Heart right ventricle (tissue), 16 donors: ENCODE measurements at regions of chr2 and their contacts with region 1.

Region 1: DNA sequence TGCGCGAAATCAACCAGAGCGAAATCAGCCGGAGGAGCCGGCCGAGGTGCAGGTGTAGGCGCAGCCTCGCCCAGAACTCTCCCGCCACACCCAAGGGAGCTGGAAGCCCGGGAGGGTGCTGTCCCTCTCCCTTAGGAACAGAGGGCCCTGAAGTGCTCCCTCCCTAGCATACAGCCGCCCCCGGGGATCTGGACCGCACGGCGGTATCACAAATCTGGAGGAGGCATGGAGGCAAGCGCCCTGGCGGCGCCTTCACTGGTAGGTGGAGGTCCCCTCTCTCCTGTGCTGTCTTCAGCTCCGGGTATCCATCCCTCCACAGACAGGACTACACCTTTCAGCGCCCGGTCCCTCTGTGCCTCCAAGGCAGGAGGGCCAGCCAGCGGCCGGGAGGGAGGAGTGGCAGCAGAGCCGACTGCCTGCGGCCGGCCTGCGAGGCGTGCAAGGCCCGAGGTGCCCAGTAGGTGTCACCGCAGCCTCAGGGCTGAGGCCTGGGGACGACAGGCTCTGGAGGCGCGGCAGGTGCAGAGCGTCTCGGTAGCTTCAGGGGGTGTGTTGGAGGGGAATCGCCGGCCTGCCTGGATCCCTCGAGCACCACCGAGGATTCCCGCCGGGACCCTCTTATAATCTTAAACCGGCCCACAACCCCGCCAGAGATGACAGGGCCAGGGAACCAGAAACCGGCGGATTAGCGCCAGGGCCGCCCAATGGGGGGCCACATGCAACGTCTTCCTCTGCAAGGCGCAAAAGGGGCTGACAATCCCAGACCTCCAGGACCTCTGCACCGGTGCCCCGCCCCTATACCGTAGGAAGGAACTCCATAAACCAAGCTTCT is 2.8 kb downstream of the IHH start:
- DNase-seq: peak; percentile 63 to 80
- ATAC-seq: peak; percentile 91 to 97 (median 94)
- H3K4me3 ChIP-seq: peak overlapping the region in 4 of 10 donors; percentile 4 to 21 (median 18)
- H3K27ac ChIP-seq: no peak overlapping the region
- H3K4me1 ChIP-seq: peaks cover 27 to 40% (median 37%) of the 10 kb centered on the region in 9 donors
- H3K27me3 ChIP-seq: peaks cover 39 to 99% (median 88%) of the 10 kb centered on the region in 7 donors
- CTCF ChIP-seq: peak; percentile 88 to 97 (median 96)

Region 2: GRCh38 chr2:219104107-219105035 is 46.4 kb after region 1 on chr2:
- intact Hi-C with region 1: loop called in 1 of 10 experiments (anchors 2 kb)
- DNase-seq: no peak
- ATAC-seq: no peak
- H3K4me3 ChIP-seq: no peak overlapping the region
- H3K27ac ChIP-seq: no peak overlapping the region
- H3K4me1 ChIP-seq: peaks cover 4 to 29% (median 14%) of the 10 kb centered on the region in 9 donors
- H3K27me3 ChIP-seq: no peaks in the 10 kb centered on the region
- CTCF ChIP-seq: peak; percentile 42 to 77 (median 53)

Region 3: DNA sequence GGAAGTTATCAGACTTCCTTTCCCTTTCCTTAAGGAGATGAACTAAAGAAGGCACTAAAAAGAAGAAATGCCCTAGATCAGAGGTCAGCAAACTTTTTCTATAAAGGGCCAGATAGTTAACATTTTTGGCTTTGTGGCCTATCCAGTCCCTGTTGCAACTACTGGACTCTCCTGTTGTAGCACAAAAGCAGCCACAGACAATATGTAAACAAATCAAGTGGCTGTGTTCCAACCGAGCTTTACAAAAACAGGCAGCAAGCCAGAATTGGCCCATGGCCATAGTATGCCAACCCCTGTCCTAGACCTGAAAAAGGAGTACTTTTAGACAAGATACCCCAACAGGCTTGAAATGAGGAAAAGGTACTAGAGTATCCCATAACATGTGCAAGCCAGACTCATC is 91.7 kb after region 1 on chr2:
- intact Hi-C with region 1: loop called in 5 of 10 experiments (anchors 2 to 5 kb)
- DNase-seq: no peak
- ATAC-seq: no peak
- H3K4me3 ChIP-seq: no peak overlapping the region
- H3K27ac ChIP-seq: no peak overlapping the region
- H3K4me1 ChIP-seq: peaks cover 0 to 8% (median 0%) of the 10 kb centered on the region in 9 donors
- H3K27me3 ChIP-seq: no peaks in the 10 kb centered on the region
- CTCF ChIP-seq: no peak

Region 4: GRCh38 chr2:219160186-219161017 is 102.5 kb after region 1 on chr2 and contains the start of gene NHEJ1:
- intact Hi-C with region 1: loop called in 6 of 10 experiments (anchors 1 to 5 kb)
- DNase-seq: peak; percentile 97 to 98
- ATAC-seq: peak; percentile 96 to 98 (median 97)
- H3K4me3 ChIP-seq: peak within 1 kb of the TSS; percentile 40 to 74 (median 62)
- H3K27ac ChIP-seq: peak within 1 kb of the TSS; percentile 80 to 94 (median 92)
- H3K4me1 ChIP-seq: peaks cover 0 to 19% (median 11%) of the 10 kb centered on the region in 9 donors
- H3K27me3 ChIP-seq: no peaks in the 10 kb centered on the region
- CTCF ChIP-seq: peak; percentile 99 to 100 (median 99)
- total RNA-seq, gene NHEJ1: 4.7 to 12.0 (median 7.1) TPM

Region 5: DNA sequence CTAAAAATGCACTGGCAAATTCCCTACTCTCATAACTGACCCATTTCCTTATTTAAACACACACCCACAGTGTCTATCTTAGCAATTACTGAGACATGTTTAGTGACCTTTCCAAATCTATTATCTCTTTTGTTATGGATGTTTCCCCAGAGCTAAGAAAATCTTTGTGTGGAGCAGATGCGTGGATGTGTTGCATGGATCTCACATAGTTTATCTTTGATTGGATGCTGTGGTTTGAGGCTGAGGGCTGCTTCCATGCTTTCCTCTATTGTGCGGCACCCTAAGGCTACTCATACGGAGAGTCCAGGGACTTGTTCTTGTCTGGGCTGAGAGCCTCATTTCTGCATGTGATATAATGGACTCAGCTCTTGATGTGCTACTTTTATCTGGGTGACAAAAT is 176.4 kb after region 1 on chr2:
- intact Hi-C with region 1: no loop called
- DNase-seq: no peak
- ATAC-seq: no peak
- H3K4me3 ChIP-seq: no peak overlapping the region
- H3K27ac ChIP-seq: no peak overlapping the region
- H3K4me1 ChIP-seq: peaks cover 7 to 29% (median 13%) of the 10 kb centered on the region in 9 donors
- H3K27me3 ChIP-seq: no peaks in the 10 kb centered on the region
- CTCF ChIP-seq: no peak

Region 6: GRCh38 chr2:219308142-219309093 is 250.5 kb after region 1 on chr2:
- intact Hi-C with region 1: loop called in 1 of 10 experiments (anchors 10 kb)
- DNase-seq: peak; percentile 57 to 72
- ATAC-seq: peak; percentile 70 to 85 (median 81)
- H3K4me3 ChIP-seq: peak overlapping the region in 2 of 10 donors; percentile 19 to 23
- H3K27ac ChIP-seq: no peak overlapping the region
- H3K4me1 ChIP-seq: peaks cover 0 to 5% (median 0%) of the 10 kb centered on the region in 9 donors
- H3K27me3 ChIP-seq: peaks cover 5 to 77% (median 67%) of the 10 kb centered on the region in 7 donors
- CTCF ChIP-seq: no peak